Sigmoid colon (tissue), 7 donors: ENCODE measurements at regions of chr3 and their contacts with region 1.

Region 1: GRCh38 chr3:190017521-190018288 is 103.0 kb downstream of the P3H2 start:
- DNase-seq: no peak
- H3K4me3 ChIP-seq: no peak overlapping the region
- H3K27ac ChIP-seq: no peak overlapping the region
- H3K4me1 ChIP-seq: peaks cover 0 to 32% (median 10%) of the 10 kb centered on the region in 4 donors
- H3K27me3 ChIP-seq: no peaks in the 10 kb centered on the region
- CTCF ChIP-seq: peak in 1 of 4 experiments; percentile 35
- EP300 ChIP-seq: no peak
- POLR2A ChIP-seq: no peak

Region 2: GRCh38 chr3:189967254-189967865 is 50.3 kb before region 1 on chr3:
- intact Hi-C with region 1: loop called (anchors 5 kb)
- DNase-seq: no peak
- H3K4me3 ChIP-seq: no peak overlapping the region
- H3K27ac ChIP-seq: no peak overlapping the region
- H3K4me1 ChIP-seq: no peaks in the 10 kb centered on the region
- H3K27me3 ChIP-seq: no peaks in the 10 kb centered on the region
- CTCF ChIP-seq: peak; percentile 57 to 89 (median 80)
- EP300 ChIP-seq: peak in 1 of 4 donors; percentile 18
- POLR2A ChIP-seq: no peak